ENCODE measurements at regions of chr18 and their contacts with region 1.

Region 1: DNA sequence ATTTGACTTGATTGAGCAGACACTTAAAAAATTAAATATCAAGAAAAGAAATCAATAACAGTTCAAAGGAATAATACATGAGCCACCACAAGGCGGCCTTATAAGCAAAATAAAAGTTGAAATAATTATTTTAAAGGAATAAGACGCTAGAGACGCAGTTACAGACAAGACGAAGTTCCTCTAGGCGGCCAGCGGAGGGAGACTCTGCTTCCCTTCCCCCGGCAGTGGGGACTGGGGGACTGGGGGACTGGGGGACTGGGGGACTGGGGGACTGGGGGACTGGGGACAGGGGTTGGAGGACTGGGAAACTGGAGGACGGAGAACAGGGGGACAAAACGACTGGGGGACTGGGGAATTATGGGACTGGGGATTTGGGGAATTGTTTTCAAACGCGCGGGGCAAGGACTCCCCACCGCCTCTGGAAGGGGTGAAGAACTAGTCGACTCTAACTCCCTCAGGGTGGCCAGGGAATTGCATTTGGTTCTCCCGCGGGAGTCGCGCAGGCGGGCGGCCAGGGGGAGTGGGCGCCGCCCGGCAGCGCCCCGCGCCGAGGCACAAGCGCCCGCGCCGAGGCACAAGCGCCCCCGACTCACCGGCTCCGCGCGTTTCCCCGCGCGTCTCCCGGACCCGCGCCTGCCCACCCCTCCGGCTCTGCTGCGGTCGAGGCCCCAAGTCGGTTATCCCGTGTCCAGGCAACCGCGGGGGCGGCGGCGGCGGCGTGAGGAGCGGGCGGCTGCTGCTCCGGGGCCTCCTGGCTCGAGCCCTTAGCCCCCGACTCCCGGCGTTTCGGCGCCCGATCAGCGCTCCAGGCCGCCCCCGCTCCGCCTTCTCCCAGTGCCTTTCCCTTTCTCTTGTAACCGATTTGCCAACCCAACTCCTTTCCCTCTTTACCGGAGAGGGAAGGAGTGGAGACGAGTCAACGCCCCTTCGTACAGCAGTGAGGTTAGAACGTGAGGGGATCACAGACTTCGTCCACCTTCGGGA is at the start of gene CCDC178:
- DNase-seq: peak; percentile 8 to 21
- ATAC-seq: peak in 7 of 8 donors; percentile 50 to 90 (median 62)
- H3K4me3 ChIP-seq: peak within 1 kb of the TSS in 9 of 10 donors; percentile 45 to 60 (median 52)
- H3K27ac ChIP-seq: peak within 1 kb of the TSS in 1 of 10 donors; percentile 6
- H3K4me1 ChIP-seq: peaks cover 0 to 7% (median 4%) of the 10 kb centered on the region in 9 donors
- H3K27me3 ChIP-seq: peaks cover 0 to 24% (median 7%) of the 10 kb centered on the region in 7 donors
- CTCF ChIP-seq: peak in 7 of 9 donors; percentile 13 to 49 (median 41)
- total RNA-seq, gene CCDC178: 0.28 to 1.5 (median 0.37) TPM in 5 of 10 donors, not detected in the others

Region 2: GRCh38 chr18:32937007-32937540 is 503.3 kb before region 1 on chr18:
- intact Hi-C with region 1: no loop called
- DNase-seq: no peak
- ATAC-seq: no peak
- H3K4me3 ChIP-seq: no peak overlapping the region
- H3K27ac ChIP-seq: no peak overlapping the region
- H3K4me1 ChIP-seq: no peaks in the 10 kb centered on the region
- H3K27me3 ChIP-seq: no peaks in the 10 kb centered on the region
- CTCF ChIP-seq: no peak

Region 3: DNA sequence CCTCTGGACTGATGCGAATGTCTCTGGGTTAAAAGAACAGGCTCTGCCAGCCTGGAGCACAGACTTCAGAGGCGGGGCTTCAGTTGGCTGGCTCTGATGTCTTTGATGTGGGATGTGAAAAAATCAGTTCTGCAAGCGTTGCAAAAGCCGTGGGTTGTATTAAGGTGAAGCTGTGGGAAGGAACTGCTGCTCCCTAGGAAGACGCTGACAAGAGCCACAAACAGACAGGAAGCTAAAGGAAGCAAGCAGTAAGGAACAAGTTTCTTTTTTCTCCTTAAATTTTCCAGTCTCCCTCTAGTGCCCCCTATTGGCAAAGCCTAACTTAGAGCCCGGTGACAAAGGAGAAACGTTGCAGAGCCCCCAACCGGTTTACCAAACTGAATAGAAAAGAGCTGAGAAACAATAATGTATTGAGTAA is 238.8 kb before region 1 on chr18:
- intact Hi-C with region 1: no loop called
- DNase-seq: no peak
- ATAC-seq: no peak
- H3K4me3 ChIP-seq: no peak overlapping the region
- H3K27ac ChIP-seq: no peak overlapping the region
- H3K4me1 ChIP-seq: no peaks in the 10 kb centered on the region
- H3K27me3 ChIP-seq: peaks cover 0 to 8% (median 0%) of the 10 kb centered on the region in 7 donors
- CTCF ChIP-seq: peak in 6 of 9 donors; percentile 28 to 59 (median 33)

Region 4: DNA sequence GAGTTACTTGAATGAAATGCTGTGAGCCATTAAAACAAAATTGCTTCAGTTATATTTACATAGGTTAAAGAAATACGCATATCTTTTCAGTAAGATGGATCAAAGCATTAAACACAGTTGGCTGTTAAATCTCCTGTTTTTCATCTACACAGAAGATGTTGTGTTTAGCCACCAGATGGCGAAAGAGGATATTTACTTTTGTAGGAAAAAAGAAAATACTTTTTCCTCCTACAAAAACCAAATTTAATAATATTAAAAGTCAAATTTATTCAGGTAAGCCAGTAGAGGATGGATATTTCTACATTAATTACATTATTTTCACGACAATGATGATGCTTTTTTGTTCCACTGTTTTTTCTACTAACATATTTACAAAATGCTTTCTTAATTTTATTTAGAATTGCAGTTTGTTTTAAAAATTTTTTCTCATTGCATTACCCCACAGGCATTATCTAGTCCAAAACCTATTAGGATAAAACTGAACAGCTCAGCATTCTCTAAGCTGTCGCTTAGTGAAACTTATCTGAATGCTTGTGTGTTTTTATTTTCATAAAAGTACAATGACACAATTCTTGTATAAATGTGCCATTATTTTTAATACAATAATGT is 311.4 kb after region 1 on chr18:
- intact Hi-C with region 1: loop called in 1 of 10 experiments (anchors 10 kb)
- DNase-seq: no peak
- ATAC-seq: no peak
- H3K4me3 ChIP-seq: no peak overlapping the region
- H3K27ac ChIP-seq: no peak overlapping the region
- H3K4me1 ChIP-seq: peaks cover 0 to 9% (median 0%) of the 10 kb centered on the region in 9 donors
- H3K27me3 ChIP-seq: no peaks in the 10 kb centered on the region
- CTCF ChIP-seq: peak in 8 of 9 donors; percentile 30 to 56 (median 46)

Region 5: DNA sequence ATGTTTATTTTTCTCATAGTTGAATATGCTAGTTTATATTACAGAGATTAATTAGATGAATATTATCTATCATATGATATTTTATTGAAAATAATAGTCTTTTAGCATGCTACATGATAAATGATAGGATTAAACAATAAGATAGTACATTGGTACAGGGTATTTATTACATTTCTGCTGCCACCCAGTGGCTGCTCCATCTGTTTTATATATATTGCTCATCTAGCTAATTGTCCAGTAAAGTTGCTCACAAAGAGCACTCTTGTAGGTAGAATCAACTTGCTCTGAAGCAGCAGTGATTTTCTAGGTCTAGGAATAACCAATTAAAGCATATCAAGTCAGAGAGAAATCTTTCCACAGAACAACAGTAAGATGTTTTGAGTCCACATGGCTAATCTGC is 321.0 kb after region 1 on chr18:
- intact Hi-C with region 1: loop called in 4 of 10 experiments (anchors 5 to 10 kb)
- DNase-seq: peak in 1 of 2 donors; percentile 8
- ATAC-seq: no peak
- H3K4me3 ChIP-seq: no peak overlapping the region
- H3K27ac ChIP-seq: no peak overlapping the region
- H3K4me1 ChIP-seq: no peaks in the 10 kb centered on the region
- H3K27me3 ChIP-seq: no peaks in the 10 kb centered on the region
- CTCF ChIP-seq: peak in 6 of 9 donors; percentile 37 to 56 (median 44)

Measured in heart right ventricle (tissue), 16 donors.